H1 (cell line): ENCODE measurements at regions of chr10 and their contacts with region 1.

Region 1: DNA sequence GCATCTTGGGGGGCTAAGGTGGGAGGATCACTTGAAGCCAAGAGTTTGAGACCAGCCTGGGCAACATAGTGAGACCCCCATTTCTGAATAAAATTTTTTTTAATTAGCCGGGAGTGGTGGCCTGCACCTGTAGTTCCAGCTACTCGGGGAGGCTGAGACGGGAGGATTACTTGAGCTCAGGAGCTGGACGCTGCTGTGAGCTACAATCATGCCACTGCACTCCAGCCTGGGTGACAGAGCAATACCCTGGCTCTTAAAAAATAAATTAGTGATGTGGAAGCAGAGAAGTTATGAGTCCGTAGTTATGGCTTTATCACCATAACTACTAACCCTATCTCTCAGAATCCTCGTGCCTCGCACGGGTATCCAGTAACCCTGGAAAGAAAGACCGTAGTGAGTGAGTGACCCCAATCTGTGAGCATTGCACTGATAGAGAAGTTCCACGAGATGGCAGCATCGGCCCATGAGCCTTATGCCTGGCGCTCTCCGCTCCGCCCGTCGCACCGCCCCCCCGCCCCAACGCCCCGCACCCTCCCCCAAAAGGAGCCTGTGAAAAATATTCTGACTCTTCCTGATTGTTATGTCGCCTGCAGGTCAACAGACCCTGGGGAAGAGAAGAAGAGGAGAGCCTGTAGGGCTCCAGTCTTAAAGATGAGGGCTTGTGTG is 4.9 kb upstream of the SLC29A3 start:
- DNase-seq: peak; percentile 9 to 73
- H3K4me3 ChIP-seq: peak overlapping the region; percentile 5 to 55 (median 18); a peak in 4 of 8 replicates
- H3K27ac ChIP-seq: no peak overlapping the region
- H3K4me1 ChIP-seq: peaks cover 2 to 5% (median 3%) of the 10 kb centered on the region in 4 experiments; a peak in 4 of 7 replicates
- H3K27me3 ChIP-seq: peaks cover 0 to 12% (median 3%) of the 10 kb centered on the region in 4 experiments; a peak in 4 of 7 replicates
- CTCF ChIP-seq: peak; percentile 69 to 81 (median 79)
- EP300 ChIP-seq: no peak
- POLR2A ChIP-seq: no peak
- RAD21 ChIP-seq: peak; percentile 84 to 85

Region 2: GRCh38 chr10:71285180-71285545 is 29.0 kb before region 1 on chr10:
- CTCF ChIA-PET with region 1: interaction called, 11 read pairs
- POLR2A ChIA-PET with region 1: no interaction called
- DNase-seq: peak in 1 of 2 experiments; percentile 85
- H3K4me3 ChIP-seq: no peak overlapping the region
- H3K27ac ChIP-seq: no peak overlapping the region
- H3K4me1 ChIP-seq: no peaks in the 10 kb centered on the region
- H3K27me3 ChIP-seq: no peaks in the 10 kb centered on the region
- CTCF ChIP-seq: peak; percentile 80 to 85 (median 85)
- EP300 ChIP-seq: no peak
- POLR2A ChIP-seq: no peak
- RAD21 ChIP-seq: peak; percentile 91

Region 3: GRCh38 chr10:71333129-71333887 is 19.1 kb after region 1 on chr10:
- CTCF ChIA-PET with region 1: interaction called, 56 read pairs
- POLR2A ChIA-PET with region 1: interaction called, 4 read pairs
- DNase-seq: no peak
- H3K4me3 ChIP-seq: no peak overlapping the region
- H3K27ac ChIP-seq: no peak overlapping the region
- H3K4me1 ChIP-seq: peaks cover 0 to 18% (median 10%) of the 10 kb centered on the region in 4 experiments; a peak in 6 of 7 replicates
- H3K27me3 ChIP-seq: no peaks in the 10 kb centered on the region
- CTCF ChIP-seq: no peak
- EP300 ChIP-seq: no peak
- POLR2A ChIP-seq: no peak
- RAD21 ChIP-seq: no peak

Region 4: GRCh38 chr10:71351628-71352319 is 37.6 kb after region 1 on chr10:
- CTCF ChIA-PET with region 1: interaction called, 52 read pairs
- POLR2A ChIA-PET with region 1: interaction called, 3 read pairs
- DNase-seq: no peak
- H3K4me3 ChIP-seq: no peak overlapping the region
- H3K27ac ChIP-seq: no peak overlapping the region
- H3K4me1 ChIP-seq: peaks cover 0 to 16% (median 7%) of the 10 kb centered on the region in 4 experiments; a peak in 4 of 7 replicates
- H3K27me3 ChIP-seq: no peaks in the 10 kb centered on the region
- CTCF ChIP-seq: no peak
- EP300 ChIP-seq: no peak
- POLR2A ChIP-seq: no peak
- RAD21 ChIP-seq: no peak

Region 5: GRCh38 chr10:71396084-71396720 is 82.0 kb after region 1 on chr10:
- CTCF ChIA-PET with region 1: interaction called, 31 read pairs
- POLR2A ChIA-PET with region 1: no interaction called
- DNase-seq: peak; percentile 60 to 79
- H3K4me3 ChIP-seq: peak overlapping the region; percentile 54 to 86 (median 62)
- H3K27ac ChIP-seq: no peak overlapping the region
- H3K4me1 ChIP-seq: peaks cover 0 to 18% (median 10%) of the 10 kb centered on the region in 4 experiments; a peak in 6 of 7 replicates
- H3K27me3 ChIP-seq: peaks cover 15 to 50% (median 40%) of the 10 kb centered on the region in 4 experiments
- CTCF ChIP-seq: peak; percentile 55 to 84 (median 71)
- EP300 ChIP-seq: no peak
- POLR2A ChIP-seq: no peak
- RAD21 ChIP-seq: peak; percentile 84 to 88

Region 6: DNA sequence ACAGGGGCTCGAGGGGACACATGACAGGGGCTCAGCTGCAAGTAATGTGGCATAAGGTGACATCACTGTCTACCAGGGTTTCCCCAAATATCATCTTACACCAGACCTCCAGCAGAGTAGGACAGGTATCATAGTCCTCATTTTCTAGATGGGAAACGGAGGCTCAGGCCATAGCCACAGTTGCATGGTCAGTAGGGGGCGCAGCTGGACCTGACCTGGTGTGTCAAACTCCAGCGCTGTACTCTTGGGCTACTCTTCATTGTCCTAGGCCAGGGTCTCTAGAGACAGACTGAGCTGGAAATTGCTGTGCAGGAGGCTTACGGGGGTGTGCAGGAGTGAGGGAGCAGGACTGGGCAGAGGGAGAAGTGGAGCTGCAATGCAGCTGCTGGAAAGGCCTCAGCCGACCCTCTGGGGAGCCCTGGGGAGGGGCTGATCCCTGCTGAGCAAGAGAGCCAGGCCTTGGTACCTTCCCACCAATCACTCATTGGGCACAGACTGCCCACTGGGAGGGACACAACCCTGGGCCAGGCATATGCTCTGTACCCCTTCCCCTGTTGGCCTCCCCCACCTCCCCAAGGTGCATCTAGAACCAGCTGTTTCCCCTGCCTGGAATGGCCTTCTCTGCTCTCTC is 172.4 kb after region 1 on chr10:
- CTCF ChIA-PET with region 1: interaction called, 10 read pairs
- POLR2A ChIA-PET with region 1: no interaction called
- DNase-seq: peak in 1 of 2 experiments; percentile 93
- H3K4me3 ChIP-seq: no peak overlapping the region
- H3K27ac ChIP-seq: no peak overlapping the region
- H3K4me1 ChIP-seq: peaks cover 0 to 6% (median 1%) of the 10 kb centered on the region in 4 experiments; a peak in 3 of 7 replicates
- H3K27me3 ChIP-seq: no peaks in the 10 kb centered on the region
- CTCF ChIP-seq: peak; percentile 92 to 99 (median 96)
- EP300 ChIP-seq: no peak
- POLR2A ChIP-seq: no peak
- RAD21 ChIP-seq: peak; percentile 92 to 94